RWPE1 (cell line): ENCODE measurements at regions of chr10 and their contacts with region 1.

Region 1: GRCh38 chr10:110190170-110190569 is 17.2 kb upstream of the MXI1 start:
- DNase-seq: no peak
- H3K27ac ChIP-seq: no peak overlapping the region
- CTCF ChIP-seq: no peak

Region 2: GRCh38 chr10:110225756-110226542 is 35.8 kb after region 1 on chr10:
- CTCF ChIA-PET with region 1: no interaction called
- POLR2A ChIA-PET with region 1: no interaction called
- DNase-seq: peak; percentile 94
- H3K27ac ChIP-seq: peak overlapping the region; percentile 91
- CTCF ChIP-seq: peak; percentile 67

Region 3: GRCh38 chr10:110241407-110241806 is 51.2 kb after region 1 on chr10:
- CTCF ChIA-PET with region 1: interaction called, 12 read pairs
- POLR2A ChIA-PET with region 1: no interaction called
- DNase-seq: no peak
- H3K27ac ChIP-seq: no peak overlapping the region
- CTCF ChIP-seq: no peak